Panc1 (cell line): ENCODE measurements at regions of chr12 and their contacts with region 1.

Region 1: DNA sequence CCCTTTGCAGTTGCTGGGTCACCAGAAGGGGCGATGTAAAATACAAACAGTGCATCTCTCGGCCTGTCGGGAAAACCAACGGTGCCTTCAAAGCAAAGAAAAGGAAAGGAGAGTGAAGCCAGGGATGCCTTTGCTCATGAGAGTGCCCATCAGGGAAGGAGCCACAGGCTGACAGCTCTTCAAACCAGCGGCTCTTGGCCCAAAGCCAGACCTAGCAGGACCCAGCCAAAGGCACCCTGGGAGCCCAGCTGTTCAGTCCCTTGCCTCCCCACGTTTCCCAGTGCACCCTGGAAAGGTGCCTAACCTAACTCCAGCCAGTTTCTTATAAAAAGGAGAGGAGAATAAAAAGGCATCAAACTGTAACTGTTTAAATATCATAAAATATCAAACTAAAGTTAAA is 29.2 kb downstream of the PRMT8 start:
- DNase-seq: no peak
- ATAC-seq: no peak
- H3K4me3 ChIP-seq: no peak overlapping the region
- H3K27ac ChIP-seq: no peak overlapping the region
- H3K4me1 ChIP-seq: no peaks in the 10 kb centered on the region
- H3K27me3 ChIP-seq: no peaks in the 10 kb centered on the region; the same call in 1 of the 2 replicates
- CTCF ChIP-seq: no peak

Region 2: DNA sequence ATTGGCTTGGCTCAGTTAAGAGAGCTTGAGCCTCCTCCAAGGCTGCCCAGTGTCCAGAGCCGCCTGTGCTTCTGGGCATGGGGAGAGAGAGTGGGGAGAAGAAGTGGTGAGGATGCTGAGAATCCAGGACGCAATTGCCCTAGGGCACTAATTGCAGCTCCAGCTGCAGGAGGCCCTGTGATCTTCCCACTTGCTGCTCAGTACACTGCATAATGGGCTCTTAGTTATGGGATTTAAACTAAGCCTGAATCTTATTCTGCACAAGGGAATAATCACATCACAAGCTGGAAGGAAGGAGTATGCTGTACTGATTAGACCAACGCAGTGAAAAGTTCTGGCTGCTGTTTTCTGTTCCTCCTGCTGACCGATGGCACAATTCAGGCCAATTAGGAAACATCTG is 130.2 kb before region 1 on chr12:
- CTCF ChIA-PET with region 1: no interaction called
- POLR2A ChIA-PET with region 1: interaction called, 10 read pairs
- in situ Hi-C with region 1: no loop called
- intact Hi-C with region 1: no loop called
- DNase-seq: no peak
- ATAC-seq: no peak
- H3K4me3 ChIP-seq: no peak overlapping the region
- H3K27ac ChIP-seq: no peak overlapping the region
- H3K4me1 ChIP-seq: no peaks in the 10 kb centered on the region
- H3K27me3 ChIP-seq: peaks cover 4% of the 10 kb centered on the region; the same call in 1 of the 2 replicates
- CTCF ChIP-seq: no peak

Region 3: GRCh38 chr12:3432176-3432742 is 87.9 kb before region 1 on chr12:
- CTCF ChIA-PET with region 1: no interaction called
- POLR2A ChIA-PET with region 1: no interaction called
- in situ Hi-C with region 1: no loop called
- intact Hi-C with region 1: no loop called
- DNase-seq: no peak
- ATAC-seq: peak; percentile 62; the same call in 1 of the 2 replicates
- H3K4me3 ChIP-seq: peak overlapping the region in 1 of 2 experiments; percentile 31; a peak in 2 of 4 replicates
- H3K27ac ChIP-seq: no peak overlapping the region
- H3K4me1 ChIP-seq: no peaks in the 10 kb centered on the region
- H3K27me3 ChIP-seq: no peaks in the 10 kb centered on the region
- CTCF ChIP-seq: no peak

Region 4: GRCh38 chr12:3533703-3534386 is 13.7 kb after region 1 on chr12:
- CTCF ChIA-PET with region 1: interaction called, 13 read pairs
- POLR2A ChIA-PET with region 1: no interaction called
- in situ Hi-C with region 1: no loop called
- intact Hi-C with region 1: no loop called
- DNase-seq: no peak
- ATAC-seq: no peak
- H3K4me3 ChIP-seq: no peak overlapping the region
- H3K27ac ChIP-seq: no peak overlapping the region
- H3K4me1 ChIP-seq: no peaks in the 10 kb centered on the region
- H3K27me3 ChIP-seq: no peaks in the 10 kb centered on the region; the same call in 1 of the 2 replicates
- CTCF ChIP-seq: no peak